ENCODE measurements at regions of chr19 and their contacts with region 1.

Region 1: GRCh38 chr19:49200238-49200862 is 42.8 kb downstream of the TRPM4 start:
- DNase-seq: peak; percentile 45
- ATAC-seq: peak; percentile 73
- H3K4me3 Mint-ChIP-seq: no peak overlapping the region
- H3K27ac Mint-ChIP-seq: no peak overlapping the region
- H3K4me1 Mint-ChIP-seq: no peaks in the 10 kb centered on the region
- H3K27me3 Mint-ChIP-seq: no peaks in the 10 kb centered on the region
- CTCF ChIP-seq: no peak

Region 2: GRCh38 chr19:49073514-49074378 is 126.6 kb before region 1 on chr19:
- CTCF ChIA-PET with region 1: interaction called, 15 read pairs
- POLR2A ChIA-PET with region 1: no interaction called
- DNase-seq: peak; percentile 68
- ATAC-seq: peak; percentile 23; the same call in 1 of the 2 replicates
- H3K4me3 Mint-ChIP-seq: peak overlapping the region; percentile 68
- H3K27ac Mint-ChIP-seq: no peak overlapping the region
- H3K4me1 Mint-ChIP-seq: peaks cover 8% of the 10 kb centered on the region; the same call in 1 of the 2 replicates
- H3K27me3 Mint-ChIP-seq: peaks cover 78% of the 10 kb centered on the region
- CTCF ChIP-seq: no peak; the same call in 1 of the 2 replicates

Region 3: GRCh38 chr19:49118565-49119410 is 81.6 kb before region 1 on chr19 and contains the start of gene C19orf73:
- CTCF ChIA-PET with region 1: interaction called, 43 read pairs
- POLR2A ChIA-PET with region 1: interaction called, 3 read pairs
- DNase-seq: peak; percentile 94
- ATAC-seq: peak; percentile 81
- H3K4me3 Mint-ChIP-seq: peak within 1 kb of the TSS; percentile 75
- H3K27ac Mint-ChIP-seq: peak within 1 kb of the TSS; percentile 61
- H3K4me1 Mint-ChIP-seq: peaks cover 14% of the 10 kb centered on the region
- H3K27me3 Mint-ChIP-seq: peaks cover 64% of the 10 kb centered on the region
- CTCF ChIP-seq: no peak
- total RNA-seq, gene C19orf73: 3.1 to 3.4 TPM (median 3.2 TPM) in 3 replicates

Region 4: GRCh38 chr19:49133621-49134454 is 66.5 kb before region 1 on chr19:
- CTCF ChIA-PET with region 1: interaction called, 27 read pairs
- POLR2A ChIA-PET with region 1: interaction called, 3 read pairs
- DNase-seq: peak; percentile 90
- ATAC-seq: peak; percentile 80
- H3K4me3 Mint-ChIP-seq: peak overlapping the region; percentile 70
- H3K27ac Mint-ChIP-seq: peak overlapping the region; percentile 79; the same call in 1 of the 2 replicates
- H3K4me1 Mint-ChIP-seq: peaks cover 33% of the 10 kb centered on the region
- H3K27me3 Mint-ChIP-seq: peaks cover 51% of the 10 kb centered on the region
- CTCF ChIP-seq: no peak

Region 5: DNA sequence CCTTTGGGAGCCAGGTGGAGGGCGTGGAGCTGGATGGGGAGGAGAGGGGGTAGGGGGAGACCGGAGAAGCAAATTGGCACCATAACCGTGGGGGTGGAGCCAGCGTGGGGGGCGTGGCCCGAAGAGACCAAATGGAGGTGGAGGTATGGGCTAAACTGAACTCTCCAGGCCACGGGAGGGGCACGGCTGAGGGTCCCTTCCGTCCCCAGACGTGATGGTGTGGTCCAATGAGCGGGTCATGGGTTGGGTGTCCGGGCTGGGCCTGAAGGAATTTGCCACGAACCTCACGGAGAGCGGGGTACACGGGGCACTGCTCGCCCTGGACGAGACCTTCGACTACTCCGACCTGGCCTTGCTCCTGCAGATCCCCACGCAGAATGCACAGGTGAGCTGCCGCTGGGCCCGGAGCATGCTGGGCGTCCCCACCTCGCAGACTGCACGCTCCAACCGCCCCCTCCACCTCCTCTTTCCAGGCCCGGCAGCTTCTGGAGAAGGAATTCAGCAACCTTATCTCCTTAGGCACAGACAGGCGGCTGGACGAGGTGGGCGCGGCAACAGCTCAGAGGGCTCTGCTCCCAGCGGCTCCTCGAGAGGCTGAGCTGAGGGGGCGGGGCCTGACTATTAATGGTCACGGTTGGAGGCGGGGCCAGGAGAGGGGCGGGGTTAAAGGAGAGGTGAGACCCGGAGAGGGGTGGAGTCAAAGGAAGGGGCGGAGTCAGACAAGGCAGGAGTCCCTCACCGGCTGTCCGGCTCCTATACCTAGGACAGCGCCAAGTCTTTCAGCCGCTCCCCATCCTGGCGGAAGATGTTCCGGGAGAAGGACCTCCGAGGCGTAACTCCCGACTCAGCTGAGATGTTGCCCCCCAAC is 51.3 kb before region 1 on chr19:
- CTCF ChIA-PET with region 1: interaction called, 98 read pairs
- POLR2A ChIA-PET with region 1: interaction called, 4 read pairs
- DNase-seq: peak; percentile 100
- ATAC-seq: peak; percentile 57
- H3K4me3 Mint-ChIP-seq: peak overlapping the region; percentile 92
- H3K27ac Mint-ChIP-seq: peak overlapping the region; percentile 91
- H3K4me1 Mint-ChIP-seq: peaks cover 33% of the 10 kb centered on the region
- H3K27me3 Mint-ChIP-seq: peaks cover 42% of the 10 kb centered on the region
- CTCF ChIP-seq: no peak

Region 6: DNA sequence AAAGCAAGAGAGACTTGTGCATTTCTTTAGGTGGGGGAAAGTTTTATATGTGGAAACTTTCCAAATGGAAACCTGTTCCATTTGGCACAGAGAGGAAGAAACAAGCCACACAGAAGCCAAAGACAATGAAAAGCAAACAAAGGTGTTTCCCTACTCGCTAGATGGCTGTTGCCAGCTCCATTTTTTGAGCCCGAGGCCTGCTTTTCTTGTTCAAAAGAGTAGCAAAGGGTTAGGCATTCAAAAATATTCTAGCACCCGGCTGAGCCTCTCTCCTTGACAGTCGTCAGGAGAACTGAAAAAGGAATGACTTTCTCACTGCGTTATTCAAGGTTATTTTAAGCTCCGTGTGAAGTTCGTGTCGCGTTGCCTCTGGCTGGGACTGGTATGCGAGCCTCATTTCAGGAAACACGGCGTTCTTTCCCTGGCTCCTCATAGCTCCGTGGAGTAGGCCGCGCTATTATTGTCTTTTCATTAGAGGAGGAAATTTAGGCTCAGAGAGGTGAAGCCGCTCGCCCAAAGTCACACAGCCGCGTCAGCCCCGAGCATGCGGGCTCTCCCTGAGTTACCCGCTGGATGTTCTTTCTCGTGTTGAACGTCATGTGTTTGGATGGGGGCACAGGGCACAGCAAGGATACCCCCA is 35.1 kb before region 1 on chr19:
- CTCF ChIA-PET with region 1: interaction called, 21 read pairs
- POLR2A ChIA-PET with region 1: no interaction called
- DNase-seq: no peak
- ATAC-seq: no peak
- H3K4me3 Mint-ChIP-seq: peak overlapping the region; percentile 29
- H3K27ac Mint-ChIP-seq: peak overlapping the region; percentile 49; the same call in 1 of the 2 replicates
- H3K4me1 Mint-ChIP-seq: peaks cover 6% of the 10 kb centered on the region
- H3K27me3 Mint-ChIP-seq: peaks cover 8% of the 10 kb centered on the region
- CTCF ChIP-seq: no peak

Region 7: GRCh38 chr19:49224856-49225255 is 24.5 kb after region 1 on chr19:
- CTCF ChIA-PET with region 1: interaction called, 22 read pairs
- POLR2A ChIA-PET with region 1: no interaction called
- DNase-seq: peak; percentile 79
- ATAC-seq: peak; percentile 82
- H3K4me3 Mint-ChIP-seq: no peak overlapping the region
- H3K27ac Mint-ChIP-seq: no peak overlapping the region
- H3K4me1 Mint-ChIP-seq: peaks cover 2% of the 10 kb centered on the region; the same call in 1 of the 2 replicates
- H3K27me3 Mint-ChIP-seq: peaks cover 8% of the 10 kb centered on the region
- CTCF ChIP-seq: peak; percentile 43

Measured in WTC11 (cell line).